Activated naive CD4-positive, alpha-beta T cell treated with anti-CD3 and anti-CD28 coated beads for 36 hours (primary cell): ENCODE measurements at regions of chr6 and their contacts with region 1.

Region 1: DNA sequence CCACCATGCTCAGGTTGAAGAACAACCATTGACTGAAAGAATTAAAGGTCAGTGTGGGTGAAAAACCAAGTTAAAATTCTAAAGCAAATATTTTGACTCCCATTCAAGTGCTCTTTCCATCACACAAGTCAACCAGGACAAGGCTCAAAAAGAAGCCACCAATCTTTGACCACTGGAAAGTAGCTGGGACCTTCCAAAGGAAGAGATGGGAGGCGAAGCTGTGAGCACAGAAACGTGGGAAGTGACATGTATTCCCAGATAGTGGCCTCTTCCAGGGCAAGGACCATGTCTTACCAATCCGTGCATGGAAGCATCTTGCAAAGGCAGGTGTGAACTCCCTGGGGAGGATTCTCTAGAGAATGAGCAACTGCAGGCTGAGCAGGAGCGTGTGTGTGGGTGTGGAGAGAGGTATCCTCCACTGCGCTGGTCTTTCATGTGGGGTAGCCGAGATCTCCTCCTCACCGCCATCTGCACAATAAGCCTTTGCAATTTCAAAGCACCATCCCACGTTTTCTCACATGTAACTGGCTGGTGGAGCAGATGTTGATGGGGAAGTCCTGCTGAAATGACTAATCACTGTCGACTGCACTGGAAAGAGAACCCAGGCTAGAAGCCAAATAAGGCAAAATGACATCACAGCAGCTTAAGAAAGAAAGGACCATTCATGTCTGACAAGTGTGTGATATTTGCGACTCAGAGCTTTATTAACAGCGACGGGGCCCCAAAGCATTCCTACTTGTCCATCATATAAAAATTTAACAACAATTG is 189.4 kb upstream of the RREB1 start:
- DNase-seq: peak; percentile 91
- H3K4me3 Mint-ChIP-seq: no peak overlapping the region
- H3K27ac Mint-ChIP-seq: no peak overlapping the region
- H3K4me1 Mint-ChIP-seq: peaks cover 30% of the 10 kb centered on the region
- H3K27me3 Mint-ChIP-seq: peaks cover 20% of the 10 kb centered on the region

Region 2: DNA sequence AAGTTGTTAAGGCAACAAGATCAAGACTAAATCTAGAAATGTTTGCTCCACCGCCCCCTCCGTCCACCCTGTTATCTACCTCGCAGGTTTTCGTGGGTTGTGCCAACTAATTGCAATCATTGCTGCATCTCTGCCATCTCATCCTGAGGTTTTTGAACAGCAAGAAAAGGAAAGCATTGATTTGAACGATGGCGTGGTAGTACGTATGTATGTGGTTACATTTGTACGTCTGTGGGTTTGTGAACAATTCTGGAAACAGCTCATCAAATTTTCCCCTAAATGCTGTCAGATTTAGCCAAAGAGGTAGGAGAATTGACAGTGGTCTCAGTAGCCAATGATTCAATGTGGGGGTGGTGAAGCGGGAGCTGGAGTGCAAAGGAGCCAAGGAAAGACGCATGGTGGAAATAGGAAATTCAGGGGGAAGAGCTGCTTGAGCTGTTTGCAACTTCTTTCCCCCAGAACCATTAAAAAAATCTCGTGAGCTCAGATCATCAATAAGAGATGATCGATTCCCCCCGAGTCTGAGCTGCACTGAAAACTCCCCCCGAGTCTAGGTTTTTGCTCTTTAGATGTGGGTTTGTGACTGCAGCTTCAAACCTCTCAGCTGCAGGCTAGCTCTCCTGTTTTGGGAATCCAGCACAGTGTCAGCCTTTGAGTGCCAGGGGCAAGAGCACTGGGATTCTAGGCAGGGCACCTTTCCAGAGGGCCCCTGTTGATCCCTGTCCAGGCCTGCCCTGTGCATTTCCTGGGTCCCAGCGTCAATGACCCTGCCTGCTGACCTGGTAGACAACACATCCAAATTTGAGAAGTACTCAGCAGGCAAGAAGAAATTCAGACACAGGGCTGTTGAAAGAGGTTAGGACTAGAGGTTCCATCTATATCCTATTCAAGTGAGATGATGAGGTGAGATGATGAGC is 402.5 kb before region 1 on chr6:
- CTCF ChIA-PET with region 1: no interaction called
- intact Hi-C with region 1: loop called (anchors 1 kb)
- DNase-seq: peak; percentile 86
- H3K4me3 Mint-ChIP-seq: no peak overlapping the region
- H3K27ac Mint-ChIP-seq: peak overlapping the region; percentile 46
- H3K4me1 Mint-ChIP-seq: peaks cover 23% of the 10 kb centered on the region
- H3K27me3 Mint-ChIP-seq: peaks cover 68% of the 10 kb centered on the region

Region 3: GRCh38 chr6:6781172-6781871 is 137.1 kb before region 1 on chr6:
- CTCF ChIA-PET with region 1: no interaction called
- intact Hi-C with region 1: no loop called
- DNase-seq: no peak
- H3K4me3 Mint-ChIP-seq: no peak overlapping the region
- H3K27ac Mint-ChIP-seq: no peak overlapping the region
- H3K4me1 Mint-ChIP-seq: no peaks in the 10 kb centered on the region
- H3K27me3 Mint-ChIP-seq: peaks cover 6% of the 10 kb centered on the region

Region 4: DNA sequence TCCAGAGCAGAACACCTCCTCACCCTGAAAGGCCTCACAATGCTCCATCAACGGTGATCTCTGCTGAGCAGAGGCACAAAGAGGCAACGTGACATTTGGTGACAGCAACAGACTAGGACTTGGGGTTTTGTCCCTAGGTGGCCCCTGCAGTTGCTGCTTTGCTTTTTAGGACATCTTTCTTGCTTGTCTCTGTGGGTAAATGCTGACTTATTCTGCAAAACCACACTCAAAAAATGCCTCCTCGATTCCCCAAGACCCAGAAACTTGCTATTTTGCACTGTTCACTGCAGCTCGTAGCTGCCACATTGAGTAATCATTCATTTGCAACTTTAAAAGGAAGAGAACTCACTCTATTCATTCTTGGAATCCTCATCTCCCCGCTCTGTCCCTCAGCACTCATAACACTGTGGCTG is 119.9 kb before region 1 on chr6:
- CTCF ChIA-PET with region 1: no interaction called
- intact Hi-C with region 1: loop called (anchors 2 kb)
- DNase-seq: peak; percentile 38
- H3K4me3 Mint-ChIP-seq: no peak overlapping the region
- H3K27ac Mint-ChIP-seq: peak overlapping the region; percentile 37
- H3K4me1 Mint-ChIP-seq: peaks cover 32% of the 10 kb centered on the region
- H3K27me3 Mint-ChIP-seq: no peaks in the 10 kb centered on the region

Region 5: GRCh38 chr6:6931071-6932025 is 12.9 kb after region 1 on chr6:
- CTCF ChIA-PET with region 1: no interaction called
- intact Hi-C with region 1: no loop called
- DNase-seq: no peak
- H3K4me3 Mint-ChIP-seq: no peak overlapping the region
- H3K27ac Mint-ChIP-seq: no peak overlapping the region
- H3K4me1 Mint-ChIP-seq: no peaks in the 10 kb centered on the region
- H3K27me3 Mint-ChIP-seq: peaks cover 11% of the 10 kb centered on the region

Region 6: DNA sequence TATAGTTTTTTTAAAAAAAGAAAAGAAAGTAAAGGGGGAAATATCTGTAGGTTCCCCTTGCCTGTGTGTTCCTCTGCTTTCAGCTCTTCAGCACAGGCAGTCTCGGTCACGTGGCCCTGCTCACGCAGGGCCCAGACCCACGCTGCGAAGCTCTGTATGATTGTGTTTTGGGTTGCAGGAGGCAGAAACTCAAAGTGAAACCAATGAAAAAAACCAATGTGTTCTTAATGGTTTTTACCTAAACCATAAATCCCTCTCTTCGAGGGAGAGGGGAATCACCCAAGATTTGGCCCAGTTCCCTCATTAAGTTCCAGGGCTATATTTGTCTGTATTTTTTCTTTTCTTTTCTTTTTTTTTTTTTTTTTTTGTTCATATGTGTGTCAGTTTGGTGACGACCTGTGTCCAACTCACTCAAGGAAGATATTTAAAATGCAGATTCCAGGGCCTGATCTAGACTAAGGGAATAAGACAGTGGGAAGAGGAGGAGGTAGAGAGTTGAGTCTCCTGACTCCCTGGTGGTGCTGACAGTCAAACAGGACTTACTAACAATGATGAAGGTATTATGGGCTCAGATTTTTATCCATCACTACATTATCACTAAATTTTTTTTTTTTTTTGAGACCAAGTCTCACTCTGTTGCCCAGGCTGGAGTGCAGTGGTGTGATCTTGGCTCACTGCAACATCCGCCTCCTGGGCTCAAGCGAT is 155.6 kb after region 1 on chr6:
- CTCF ChIA-PET with region 1: no interaction called
- intact Hi-C with region 1: loop called (anchors 1 kb)
- DNase-seq: peak; percentile 84
- H3K4me3 Mint-ChIP-seq: no peak overlapping the region
- H3K27ac Mint-ChIP-seq: peak overlapping the region; percentile 9
- H3K4me1 Mint-ChIP-seq: peaks cover 12% of the 10 kb centered on the region
- H3K27me3 Mint-ChIP-seq: peaks cover 9% of the 10 kb centered on the region

Region 7: GRCh38 chr6:7137335-7138045 is 219.1 kb after region 1 on chr6:
- CTCF ChIA-PET with region 1: no interaction called
- intact Hi-C with region 1: loop called (anchors 2 kb)
- DNase-seq: peak; percentile 84
- H3K4me3 Mint-ChIP-seq: peak overlapping the region; percentile 79
- H3K27ac Mint-ChIP-seq: peak overlapping the region; percentile 98
- H3K4me1 Mint-ChIP-seq: peaks cover 80% of the 10 kb centered on the region
- H3K27me3 Mint-ChIP-seq: no peaks in the 10 kb centered on the region

Region 8: GRCh38 chr6:7312616-7313504 is 394.5 kb after region 1 on chr6 and contains the start of gene SSR1:
- CTCF ChIA-PET with region 1: no interaction called
- intact Hi-C with region 1: loop called (anchors 2 kb)
- DNase-seq: peak; percentile 96
- H3K4me3 Mint-ChIP-seq: peak within 1 kb of the TSS; percentile 92
- H3K27ac Mint-ChIP-seq: peak within 1 kb of the TSS; percentile 94
- H3K4me1 Mint-ChIP-seq: peaks cover 40% of the 10 kb centered on the region
- H3K27me3 Mint-ChIP-seq: no peaks in the 10 kb centered on the region
- total RNA-seq, gene SSR1: 116 to 121 TPM

Region 9: GRCh38 chr6:8315154-8315553 is 1396.8 kb after region 1 on chr6:
- CTCF ChIA-PET with region 1: no interaction called
- intact Hi-C with region 1: no loop called
- DNase-seq: no peak
- H3K4me3 Mint-ChIP-seq: no peak overlapping the region
- H3K27ac Mint-ChIP-seq: no peak overlapping the region
- H3K4me1 Mint-ChIP-seq: no peaks in the 10 kb centered on the region
- H3K27me3 Mint-ChIP-seq: peaks cover 21% of the 10 kb centered on the region